Endothelial cell of umbilical vein (primary cell): ENCODE measurements at regions of chr12 and their contacts with region 1.

Region 1: GRCh38 chr12:95918194-95918993 is 24.0 kb downstream of the CCDC38 start:
- DNase-seq: peak; percentile 48
- H3K4me3 ChIP-seq: no peak overlapping the region
- H3K27ac ChIP-seq: no peak overlapping the region
- H3K4me1 ChIP-seq: no peaks in the 10 kb centered on the region
- H3K27me3 ChIP-seq: peaks cover 16 to 24% of the 10 kb centered on the region in 2 experiments
- CTCF ChIP-seq: peak; percentile 76 to 82
- POLR2A ChIP-seq: no peak

Region 2: GRCh38 chr12:95848575-95849388 is 69.6 kb before region 1 on chr12:
- CTCF ChIA-PET with region 1: no interaction called
- POLR2A ChIA-PET with region 1: no interaction called
- dilution Hi-C with region 1: no loop called
- intact Hi-C with region 1: no loop called
- DNase-seq: peak; percentile 80
- H3K4me3 ChIP-seq: no peak overlapping the region
- H3K27ac ChIP-seq: no peak overlapping the region
- H3K4me1 ChIP-seq: no peaks in the 10 kb centered on the region
- H3K27me3 ChIP-seq: peaks cover 0 to 12% of the 10 kb centered on the region in 2 experiments
- CTCF ChIP-seq: peak; percentile 30 to 31
- POLR2A ChIP-seq: no peak

Region 3: DNA sequence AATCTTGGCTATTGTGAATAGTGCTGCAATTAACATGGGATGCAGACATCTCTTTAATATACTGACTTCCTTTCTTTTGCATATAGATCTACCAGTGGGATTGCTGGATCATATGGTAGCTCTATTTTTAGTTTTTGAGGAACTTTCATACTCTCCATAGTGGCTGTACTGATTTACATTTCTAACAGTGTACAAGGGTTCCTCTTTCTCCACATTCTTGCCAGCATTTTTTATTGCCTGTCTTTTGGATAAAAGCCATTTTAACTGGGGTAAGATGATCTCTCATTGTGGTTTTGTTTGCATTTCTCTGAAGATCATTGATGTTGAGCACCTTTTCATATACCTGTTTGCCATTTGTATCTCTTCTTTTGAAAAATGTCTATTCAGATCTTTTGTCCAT is 33.1 kb after region 1 on chr12:
- CTCF ChIA-PET with region 1: interaction called, 6 read pairs
- POLR2A ChIA-PET with region 1: no interaction called
- dilution Hi-C with region 1: no loop called
- intact Hi-C with region 1: loop called (anchors 5 kb)
- DNase-seq: no peak
- H3K4me3 ChIP-seq: no peak overlapping the region
- H3K27ac ChIP-seq: no peak overlapping the region
- H3K4me1 ChIP-seq: no peaks in the 10 kb centered on the region
- H3K27me3 ChIP-seq: peaks cover 25 to 45% of the 10 kb centered on the region in 2 experiments
- CTCF ChIP-seq: no peak
- POLR2A ChIP-seq: no peak

Region 4: DNA sequence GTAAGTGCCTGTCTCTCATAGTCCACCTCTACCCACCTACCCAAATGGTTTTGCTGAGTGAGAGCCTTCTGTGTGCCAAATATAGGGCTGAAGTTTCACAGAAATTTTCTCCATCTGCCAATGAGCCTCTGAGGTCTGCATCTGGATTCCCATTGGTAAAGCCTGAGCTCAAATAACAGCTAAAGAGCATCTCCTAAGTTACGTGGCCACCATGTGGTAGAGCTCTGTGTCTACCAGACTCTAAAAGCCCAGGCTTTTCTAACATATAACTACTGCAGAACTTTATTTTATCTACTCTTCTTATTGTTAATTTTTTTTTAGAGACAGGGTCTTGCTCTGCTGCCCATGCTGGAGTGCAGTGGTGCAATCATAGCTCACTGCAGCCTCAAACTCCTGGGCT is 40.7 kb after region 1 on chr12:
- CTCF ChIA-PET with region 1: interaction called, 26 read pairs
- POLR2A ChIA-PET with region 1: no interaction called
- dilution Hi-C with region 1: no loop called
- intact Hi-C with region 1: loop called (anchors 5 kb)
- DNase-seq: peak; percentile 16
- H3K4me3 ChIP-seq: no peak overlapping the region
- H3K27ac ChIP-seq: no peak overlapping the region
- H3K4me1 ChIP-seq: no peaks in the 10 kb centered on the region
- H3K27me3 ChIP-seq: peaks cover 9 to 16% of the 10 kb centered on the region in 2 experiments
- CTCF ChIP-seq: peak in 1 of 2 donors; percentile 3
- POLR2A ChIP-seq: no peak

Region 5: GRCh38 chr12:95998611-95999286 is 80.4 kb after region 1 on chr12:
- CTCF ChIA-PET with region 1: interaction called, 126 read pairs
- POLR2A ChIA-PET with region 1: no interaction called
- dilution Hi-C with region 1: no loop called
- intact Hi-C with region 1: loop called (anchors 1 kb)
- DNase-seq: peak; percentile 68
- H3K4me3 ChIP-seq: no peak overlapping the region
- H3K27ac ChIP-seq: no peak overlapping the region
- H3K4me1 ChIP-seq: no peaks in the 10 kb centered on the region
- H3K27me3 ChIP-seq: no peaks in the 10 kb centered on the region
- CTCF ChIP-seq: peak; percentile 56 to 58
- POLR2A ChIP-seq: no peak

Region 6: GRCh38 chr12:96132819-96133218 is 214.4 kb after region 1 on chr12:
- CTCF ChIA-PET with region 1: no interaction called
- POLR2A ChIA-PET with region 1: no interaction called
- dilution Hi-C with region 1: no loop called
- intact Hi-C with region 1: loop called (anchors 10 kb)
- DNase-seq: peak; percentile 48
- H3K4me3 ChIP-seq: no peak overlapping the region
- H3K27ac ChIP-seq: no peak overlapping the region
- H3K4me1 ChIP-seq: peaks cover 29% of the 10 kb centered on the region
- H3K27me3 ChIP-seq: no peaks in the 10 kb centered on the region
- CTCF ChIP-seq: peak; percentile 15 to 42
- POLR2A ChIP-seq: no peak

Region 7: DNA sequence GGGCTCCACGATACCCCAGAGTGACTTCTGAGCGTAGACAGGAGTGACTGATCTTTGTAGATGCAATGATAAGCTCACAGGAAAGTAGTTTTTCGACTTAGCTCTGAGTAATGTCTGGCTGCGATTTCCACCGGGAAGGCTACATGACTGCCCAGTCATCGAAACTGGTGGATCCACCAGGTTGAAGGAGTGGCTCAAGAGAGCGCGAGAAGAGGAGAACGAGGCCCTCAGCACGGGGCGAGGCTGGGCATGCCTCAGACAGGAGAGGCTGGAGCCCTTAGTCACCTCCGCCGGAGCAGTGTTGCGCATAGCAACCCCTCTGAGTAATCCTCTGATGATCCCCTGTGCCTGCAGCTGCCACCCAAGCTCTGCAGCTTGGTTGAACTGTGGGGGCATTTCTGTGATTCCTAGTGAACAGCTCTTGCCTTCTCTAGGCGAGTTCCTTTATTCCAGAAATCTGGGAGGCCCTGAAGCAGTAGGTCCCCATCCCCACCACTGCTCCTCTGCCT is 301.4 kb after region 1 on chr12:
- CTCF ChIA-PET with region 1: interaction called, 3 read pairs
- POLR2A ChIA-PET with region 1: no interaction called
- dilution Hi-C with region 1: no loop called
- intact Hi-C with region 1: loop called (anchors 2 kb)
- DNase-seq: peak; percentile 96
- H3K4me3 ChIP-seq: no peak overlapping the region
- H3K27ac ChIP-seq: peak overlapping the region; percentile 90
- H3K4me1 ChIP-seq: peaks cover 93% of the 10 kb centered on the region
- H3K27me3 ChIP-seq: no peaks in the 10 kb centered on the region
- CTCF ChIP-seq: no peak
- POLR2A ChIP-seq: peak; percentile 63

Region 8: DNA sequence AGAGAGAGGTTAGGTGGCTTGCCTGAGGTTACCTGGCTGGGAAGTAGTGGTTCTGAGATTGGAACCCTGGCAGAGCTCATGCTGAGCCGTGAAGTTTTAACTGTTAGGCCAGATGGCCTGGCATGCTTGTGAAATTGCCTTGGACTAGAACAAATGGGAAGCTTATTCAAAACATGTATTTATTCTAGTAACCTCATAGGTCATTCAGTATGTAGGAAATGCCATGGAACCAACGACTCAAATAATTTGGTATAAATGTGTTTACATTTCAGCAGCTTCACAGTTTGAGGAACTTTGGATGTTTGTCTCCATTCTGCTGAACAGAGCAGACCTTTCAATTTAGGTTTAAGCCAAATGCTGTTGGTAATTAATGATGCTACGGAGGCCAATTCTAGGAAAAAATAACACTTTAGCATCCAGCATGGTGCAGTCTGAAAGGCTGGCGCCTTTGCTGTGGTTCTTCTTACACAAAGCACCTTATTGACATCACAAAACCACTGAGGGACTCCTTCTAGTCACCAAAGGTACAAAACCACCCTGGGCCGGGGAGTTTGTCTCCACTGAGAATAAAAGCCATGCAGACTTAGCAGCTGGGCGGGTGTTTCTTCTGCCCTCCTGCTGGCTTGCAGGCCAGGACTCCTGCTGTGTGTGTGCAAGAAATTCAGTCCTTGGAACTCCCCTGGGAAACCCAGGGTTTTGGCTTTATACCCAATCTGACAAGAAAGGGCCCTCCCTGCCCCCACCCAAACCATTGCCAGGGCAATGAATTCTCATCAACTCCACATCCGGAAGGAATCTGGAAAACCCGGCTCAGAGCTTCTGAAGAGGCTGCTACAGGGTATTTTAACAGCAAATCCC is 339.9 kb after region 1 on chr12:
- CTCF ChIA-PET with region 1: no interaction called
- POLR2A ChIA-PET with region 1: no interaction called
- dilution Hi-C with region 1: no loop called
- intact Hi-C with region 1: loop called (anchors 10 kb)
- DNase-seq: peak; percentile 70
- H3K4me3 ChIP-seq: no peak overlapping the region
- H3K27ac ChIP-seq: peak overlapping the region; percentile 41
- H3K4me1 ChIP-seq: peaks cover 80% of the 10 kb centered on the region
- H3K27me3 ChIP-seq: no peaks in the 10 kb centered on the region
- CTCF ChIP-seq: no peak
- POLR2A ChIP-seq: no peak